Heart left ventricle (tissue), 16 donors: ENCODE measurements at regions of chr9 and their contacts with region 1.

Region 1: GRCh38 chr9:12813960-12814876 is 39.4 kb downstream of the LURAP1L start:
- DNase-seq: peak in 3 of 5 donors; percentile 16 to 47 (median 27)
- ATAC-seq: peak; percentile 72 to 91 (median 80)
- H3K4me3 ChIP-seq: peak overlapping the region in 5 of 12 donors; percentile 6 to 17 (median 13)
- H3K27ac ChIP-seq: peak overlapping the region in 10 of 12 donors; percentile 4 to 75 (median 50)
- H3K4me1 ChIP-seq: peaks cover under 1 to 49% (median 14%) of the 10 kb centered on the region in 12 donors
- H3K27me3 ChIP-seq: no peaks in the 10 kb centered on the region
- CTCF ChIP-seq: peak in 4 of 12 donors; percentile 8 to 38 (median 24)
- POLR2A ChIP-seq: no peak

Region 2: GRCh38 chr9:12457237-12457636 is 357.0 kb before region 1 on chr9:
- intact Hi-C with region 1: no loop called
- DNase-seq: no peak
- ATAC-seq: no peak
- H3K4me3 ChIP-seq: no peak overlapping the region
- H3K27ac ChIP-seq: no peak overlapping the region
- H3K4me1 ChIP-seq: no peaks in the 10 kb centered on the region
- H3K27me3 ChIP-seq: peaks cover 0 to 3% (median 0%) of the 10 kb centered on the region in 9 donors
- CTCF ChIP-seq: no peak
- POLR2A ChIP-seq: no peak

Region 3: DNA sequence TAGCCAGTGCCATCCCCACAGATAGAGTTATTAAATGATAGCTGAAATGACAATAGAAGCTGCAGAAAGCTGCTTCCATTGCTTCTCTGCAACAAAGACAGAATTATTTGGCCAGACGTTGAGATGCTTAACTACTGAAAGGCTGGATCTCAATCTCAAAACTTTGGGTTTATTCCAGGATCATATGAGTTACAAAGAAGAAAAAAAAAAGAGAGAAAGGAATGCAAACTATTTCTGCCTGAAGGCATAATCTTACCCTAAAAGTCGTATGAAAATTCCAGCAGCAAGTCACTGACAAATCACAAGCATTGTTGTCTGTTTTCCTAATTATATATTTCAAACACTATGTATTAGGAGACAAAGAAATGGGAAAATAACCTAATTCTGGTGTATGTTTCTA is 133.9 kb before region 1 on chr9:
- intact Hi-C with region 1: no loop called
- DNase-seq: no peak
- ATAC-seq: no peak
- H3K4me3 ChIP-seq: no peak overlapping the region
- H3K27ac ChIP-seq: no peak overlapping the region
- H3K4me1 ChIP-seq: no peaks in the 10 kb centered on the region
- H3K27me3 ChIP-seq: no peaks in the 10 kb centered on the region
- CTCF ChIP-seq: no peak
- POLR2A ChIP-seq: no peak

Region 4: GRCh38 chr9:12759761-12760160 is 54.5 kb before region 1 on chr9:
- intact Hi-C with region 1: loop called in 1 of 10 experiments (anchors 10 kb)
- DNase-seq: no peak
- ATAC-seq: no peak
- H3K4me3 ChIP-seq: no peak overlapping the region
- H3K27ac ChIP-seq: no peak overlapping the region
- H3K4me1 ChIP-seq: no peaks in the 10 kb centered on the region
- H3K27me3 ChIP-seq: no peaks in the 10 kb centered on the region
- CTCF ChIP-seq: no peak
- POLR2A ChIP-seq: no peak

Region 5: DNA sequence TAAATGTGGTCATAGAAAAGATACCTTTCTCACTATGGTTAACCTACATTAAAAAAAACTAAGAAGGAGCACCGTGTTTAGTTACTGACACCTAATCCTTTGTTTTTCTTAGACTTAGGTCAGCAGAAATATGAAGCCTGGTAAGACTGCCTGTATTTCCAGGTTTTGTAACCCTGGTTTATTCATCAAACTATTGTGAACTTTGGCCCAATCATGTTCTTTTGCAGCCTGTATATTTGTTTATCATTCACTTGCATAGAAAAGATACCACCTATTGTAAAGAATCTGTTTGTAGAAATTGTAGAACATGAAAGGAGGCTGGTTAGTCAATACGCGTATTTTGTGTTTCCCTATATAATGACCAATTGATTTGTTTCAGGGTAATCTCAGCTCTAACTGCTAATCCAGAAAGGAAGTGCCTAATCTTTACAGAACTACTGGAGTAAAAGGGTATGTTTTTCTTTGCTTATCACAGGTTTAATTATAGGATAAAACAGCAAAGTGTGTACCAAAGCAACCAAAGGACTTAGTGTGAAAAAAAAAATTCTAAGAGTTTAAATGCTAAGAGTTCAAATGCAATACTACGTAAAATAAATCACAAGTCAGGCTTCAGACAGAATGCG is 64.2 kb after region 1 on chr9:
- intact Hi-C with region 1: loop called in 2 of 10 experiments (anchors 10 kb)
- DNase-seq: no peak
- ATAC-seq: no peak
- H3K4me3 ChIP-seq: no peak overlapping the region
- H3K27ac ChIP-seq: no peak overlapping the region
- H3K4me1 ChIP-seq: peaks cover 0 to 21% (median 5%) of the 10 kb centered on the region in 12 donors
- H3K27me3 ChIP-seq: no peaks in the 10 kb centered on the region
- CTCF ChIP-seq: no peak
- POLR2A ChIP-seq: no peak

Region 6: DNA sequence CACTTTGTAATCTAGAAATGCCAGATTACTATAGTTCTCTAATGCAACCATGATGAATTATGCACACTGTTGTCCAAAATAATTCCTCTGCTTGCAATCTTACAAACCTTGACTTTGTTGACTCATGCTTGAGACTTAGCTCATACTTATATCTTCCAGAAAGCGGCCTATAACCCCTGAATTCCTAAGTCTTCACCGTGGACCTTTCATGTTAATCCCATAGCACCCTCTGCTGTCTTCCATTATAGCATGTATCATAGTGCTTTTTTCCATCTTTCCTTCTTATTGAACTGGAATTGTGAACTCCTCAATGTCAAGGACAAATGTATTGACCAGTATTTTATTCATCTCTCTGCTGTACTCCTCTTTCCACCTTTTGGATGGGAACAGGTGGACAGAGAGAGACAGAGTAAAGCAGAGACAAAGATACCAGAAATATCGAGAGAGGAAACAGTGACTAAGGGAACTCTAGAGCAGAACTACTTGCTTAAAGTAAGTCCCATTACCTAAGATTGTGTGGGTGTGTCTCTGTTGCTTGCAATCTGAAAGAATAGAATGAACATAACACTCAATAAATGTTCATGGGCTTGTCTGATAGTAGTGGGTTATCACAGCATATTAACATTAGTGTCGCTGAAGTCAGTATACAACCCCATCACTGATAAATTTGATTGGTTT is 70.7 kb after region 1 on chr9:
- intact Hi-C with region 1: loop called in 1 of 10 experiments (anchors 10 kb)
- DNase-seq: no peak
- ATAC-seq: peak in 3 of 4 donors; percentile 57 to 68 (median 58)
- H3K4me3 ChIP-seq: no peak overlapping the region
- H3K27ac ChIP-seq: no peak overlapping the region
- H3K4me1 ChIP-seq: peaks cover 0 to 17% (median 2%) of the 10 kb centered on the region in 12 donors
- H3K27me3 ChIP-seq: no peaks in the 10 kb centered on the region
- CTCF ChIP-seq: peak; percentile 17 to 74 (median 57)
- POLR2A ChIP-seq: no peak

Region 7: DNA sequence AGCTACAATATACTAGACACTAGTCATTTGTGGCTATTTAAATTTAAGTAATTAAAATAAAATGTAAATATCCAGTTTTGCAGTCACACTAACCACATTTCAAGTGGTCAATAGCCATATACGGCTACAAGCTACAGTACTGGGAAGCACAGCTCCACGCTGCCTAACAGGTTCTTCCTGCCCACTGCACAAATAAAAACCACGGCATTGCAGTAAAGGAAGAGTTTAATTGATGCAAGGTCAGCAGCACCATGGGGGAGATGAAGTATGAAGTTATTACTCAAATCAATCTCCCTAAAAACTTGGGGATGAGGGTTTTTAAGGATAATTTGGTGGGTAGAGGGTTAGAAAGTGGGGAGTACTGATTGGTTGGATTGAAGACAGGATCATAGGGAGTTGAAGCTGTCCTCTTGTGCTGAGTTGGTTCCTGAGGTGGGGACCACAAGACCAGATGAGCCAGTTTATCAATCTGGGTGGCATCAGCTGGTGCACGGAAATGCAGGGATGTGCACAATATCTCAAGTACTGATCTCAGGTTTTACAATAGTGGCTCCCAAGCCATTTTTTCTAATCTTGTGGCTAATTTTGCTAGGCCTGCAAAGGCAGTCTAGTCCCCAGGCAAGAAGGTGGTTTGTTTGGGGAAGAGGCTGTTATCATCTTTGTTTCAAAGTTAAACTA is 94.9 kb after region 1 on chr9:
- intact Hi-C with region 1: no loop called
- DNase-seq: no peak
- ATAC-seq: no peak
- H3K4me3 ChIP-seq: no peak overlapping the region
- H3K27ac ChIP-seq: no peak overlapping the region
- H3K4me1 ChIP-seq: no peaks in the 10 kb centered on the region
- H3K27me3 ChIP-seq: no peaks in the 10 kb centered on the region
- CTCF ChIP-seq: no peak
- POLR2A ChIP-seq: no peak

Region 8: GRCh38 chr9:12923468-12924009 is 109.3 kb after region 1 on chr9:
- intact Hi-C with region 1: no loop called
- DNase-seq: peak in 3 of 5 donors; percentile 22 to 49 (median 23)
- ATAC-seq: peak; percentile 80 to 82 (median 80)
- H3K4me3 ChIP-seq: no peak overlapping the region
- H3K27ac ChIP-seq: peak overlapping the region in 4 of 12 donors; percentile 19 to 55 (median 30)
- H3K4me1 ChIP-seq: peaks cover 0 to 21% (median 0%) of the 10 kb centered on the region in 12 donors
- H3K27me3 ChIP-seq: no peaks in the 10 kb centered on the region
- CTCF ChIP-seq: no peak
- POLR2A ChIP-seq: no peak